ENCODE measurements at regions of chr1 and their contacts with region 1.

Region 1: GRCh38 chr1:50978144-50978851 is 8.3 kb downstream of the CDKN2C start:
- H3K4me3 ChIP-seq: peak overlapping the region; percentile 98
- H3K27ac ChIP-seq: peak overlapping the region; percentile 99
- H3K4me1 ChIP-seq: peaks cover 13% of the 10 kb centered on the region
- CTCF ChIP-seq: no peak

Region 2: DNA sequence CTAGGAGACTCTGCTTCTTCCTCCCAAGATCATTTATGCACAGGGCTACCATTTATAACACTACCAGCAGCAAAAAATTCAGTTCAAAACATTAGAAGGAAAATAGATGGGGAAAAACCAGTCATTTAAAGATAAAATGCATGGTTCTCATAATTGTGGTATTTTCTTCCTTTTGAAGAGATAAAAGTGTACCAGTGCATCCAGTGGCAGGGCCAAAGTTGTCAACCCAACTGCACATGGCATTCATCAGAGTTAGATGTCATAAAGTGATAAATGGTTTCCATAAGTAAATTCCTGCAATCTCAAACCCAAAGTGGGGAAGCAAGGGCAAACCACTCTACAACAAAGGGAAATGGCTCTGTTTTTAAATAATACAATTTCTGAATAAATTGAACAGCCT is 435.9 kb before region 1 on chr1:
- CTCF ChIA-PET with region 1: no interaction called
- POLR2A ChIA-PET with region 1: no interaction called
- H3K4me3 ChIP-seq: no peak overlapping the region
- H3K27ac ChIP-seq: no peak overlapping the region
- H3K4me1 ChIP-seq: no peaks in the 10 kb centered on the region
- CTCF ChIP-seq: no peak

Region 3: DNA sequence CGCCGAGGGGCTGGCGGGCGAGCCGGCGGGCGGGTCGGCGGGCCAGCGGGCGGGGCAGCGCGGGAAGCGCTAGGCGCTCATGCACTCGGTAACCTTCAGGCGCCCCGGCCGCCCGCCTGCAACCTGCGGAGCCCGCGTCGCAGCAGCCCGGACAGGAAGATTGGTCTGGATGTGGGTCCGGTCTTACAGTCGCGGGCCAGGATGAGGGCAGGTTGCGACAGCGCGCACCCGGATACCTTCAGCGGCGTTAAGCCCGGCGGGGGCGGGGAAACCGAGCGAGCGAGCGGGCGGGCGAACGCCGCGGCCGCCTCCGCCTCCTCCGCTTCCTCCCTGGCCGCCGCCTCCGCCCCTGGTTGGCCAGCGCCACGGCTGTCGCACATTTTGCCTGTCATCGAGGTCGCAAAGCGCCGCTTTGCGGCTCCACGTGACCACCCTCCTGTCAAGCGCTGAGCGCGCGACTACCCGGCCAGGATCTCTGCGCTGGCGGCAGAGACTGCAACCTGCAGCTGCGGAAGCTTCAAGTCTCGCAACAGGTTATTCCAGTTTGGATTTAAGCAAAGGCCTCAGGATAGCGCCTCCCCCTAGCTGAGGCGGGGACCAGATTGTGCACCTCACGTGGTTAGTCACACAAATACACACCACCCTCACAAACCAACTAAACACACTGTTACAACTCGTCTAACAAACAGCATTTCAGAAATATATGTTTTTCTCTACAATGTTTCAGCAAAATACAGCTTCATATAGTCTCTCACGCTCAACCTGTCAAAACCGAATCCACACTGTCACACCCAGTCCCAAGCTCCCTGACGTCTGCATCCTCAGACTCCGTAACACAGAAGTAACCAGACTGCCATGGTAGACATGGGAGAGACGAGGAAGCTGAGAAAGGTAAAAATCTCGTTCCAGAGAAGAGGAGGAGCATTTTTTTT is 18.1 kb before region 1 on chr1 and contains the start of gene FAF1:
- CTCF ChIA-PET with region 1: interaction called, 13 read pairs
- POLR2A ChIA-PET with region 1: interaction called, 16 read pairs
- H3K4me3 ChIP-seq: peak within 1 kb of the TSS; percentile 99
- H3K27ac ChIP-seq: peak within 1 kb of the TSS; percentile 87
- H3K4me1 ChIP-seq: no peaks in the 10 kb centered on the region
- CTCF ChIP-seq: peak; percentile 96

Region 4: GRCh38 chr1:50968158-50968820 is 10.0 kb before region 1 on chr1:
- CTCF ChIA-PET with region 1: interaction called, 13 read pairs
- POLR2A ChIA-PET with region 1: interaction called, 157 read pairs
- H3K4me3 ChIP-seq: peak overlapping the region; percentile 91
- H3K27ac ChIP-seq: peak overlapping the region; percentile 99
- H3K4me1 ChIP-seq: peaks cover 2% of the 10 kb centered on the region; the same call in 1 of the 2 replicates
- CTCF ChIP-seq: peak; percentile 83

Region 5: GRCh38 chr1:51214615-51215131 is 236.4 kb after region 1 on chr1:
- CTCF ChIA-PET with region 1: no interaction called
- POLR2A ChIA-PET with region 1: no interaction called
- H3K4me3 ChIP-seq: no peak overlapping the region
- H3K27ac ChIP-seq: no peak overlapping the region
- H3K4me1 ChIP-seq: no peaks in the 10 kb centered on the region
- CTCF ChIP-seq: no peak

Measured in HEK293 (cell line).